AG04450 (cell line): ENCODE measurements at regions of chr11 and their contacts with region 1.

Region 1: DNA sequence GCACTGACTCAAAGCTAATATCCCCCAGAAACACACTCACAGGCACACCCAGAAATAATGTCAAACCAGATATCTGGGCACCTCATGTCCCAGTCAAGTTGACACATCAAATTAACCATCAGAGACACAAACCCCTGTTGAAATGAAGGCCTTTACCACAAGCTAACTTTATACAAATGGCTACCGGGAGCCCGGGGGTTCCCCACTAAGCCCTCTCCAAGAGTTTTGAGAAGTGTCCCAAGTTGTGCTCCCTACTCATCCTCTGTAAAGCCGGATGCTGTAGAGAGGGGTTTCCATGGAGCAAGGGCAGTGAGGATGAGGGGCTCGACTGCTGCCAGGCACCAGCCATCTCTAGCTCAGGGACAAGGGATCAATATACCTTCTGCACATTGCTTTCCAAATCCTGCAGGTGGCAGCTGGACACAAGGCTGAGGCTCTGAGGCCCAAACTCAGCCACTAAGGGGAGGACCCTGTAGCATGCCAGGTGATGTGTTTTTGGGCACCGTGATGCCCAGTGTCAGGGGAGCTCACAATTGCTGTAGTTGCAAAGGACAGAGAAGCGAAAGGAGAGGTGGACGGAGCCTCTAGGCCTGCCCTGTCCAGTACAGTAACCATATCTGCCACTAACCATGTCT is 145.7 kb downstream of the TTC17 start:
- DNase-seq: no peak
- H3K4me3 ChIP-seq: no peak overlapping the region
- H3K27ac ChIP-seq: no peak overlapping the region
- H3K27me3 ChIP-seq: no peaks in the 10 kb centered on the region
- CTCF ChIP-seq: peak; percentile 37

Region 2: GRCh38 chr11:43567396-43567975 is 63.1 kb after region 1 on chr11:
- CTCF ChIA-PET with region 1: interaction called, 13 read pairs
- POLR2A ChIA-PET with region 1: no interaction called
- DNase-seq: peak; percentile 27
- H3K4me3 ChIP-seq: no peak overlapping the region
- H3K27ac ChIP-seq: no peak overlapping the region
- H3K27me3 ChIP-seq: peaks cover 24% of the 10 kb centered on the region
- CTCF ChIP-seq: peak; percentile 80